ENCODE measurements at regions of chr10 and their contacts with region 1.

Region 1: DNA sequence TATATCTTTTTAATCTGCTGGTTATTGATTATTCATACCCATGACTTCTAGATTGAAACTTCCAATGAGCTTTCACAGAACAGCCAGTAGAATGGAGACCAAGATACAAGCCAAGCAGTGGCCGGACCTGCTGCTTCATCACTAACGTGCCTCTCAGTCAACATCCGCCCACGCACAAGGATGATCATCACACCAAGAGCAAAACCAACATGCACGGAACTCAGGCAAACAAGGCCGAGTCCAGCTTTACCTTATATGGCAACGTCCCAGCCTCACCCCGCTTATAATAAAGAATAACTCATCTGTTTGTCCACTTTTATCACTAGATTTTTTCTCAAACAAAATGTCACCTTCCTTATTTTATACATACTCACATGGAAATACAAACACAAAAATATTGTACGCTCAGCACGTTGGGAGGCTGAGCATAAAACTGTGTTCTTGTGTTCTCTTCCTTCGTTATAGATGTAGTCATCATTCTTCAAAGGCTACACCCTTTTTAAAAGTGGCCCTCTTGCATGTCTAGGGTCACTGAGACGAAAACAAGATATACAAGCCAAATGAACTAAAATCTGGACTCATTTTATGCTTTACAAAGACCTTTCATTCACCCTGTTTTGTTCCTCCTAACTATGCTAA is 122.7 kb downstream of the SFMBT2 start:
- DNase-seq: no peak
- H3K4me3 ChIP-seq: no peak overlapping the region
- H3K27ac ChIP-seq: no peak overlapping the region
- H3K4me1 ChIP-seq: peaks cover 0 to 4% (median 2%) of the 10 kb centered on the region in 4 experiments; a peak in 1 of 7 replicates
- H3K27me3 ChIP-seq: no peaks in the 10 kb centered on the region
- CTCF ChIP-seq: no peak
- EP300 ChIP-seq: no peak
- POLR2A ChIP-seq: no peak
- RAD21 ChIP-seq: no peak

Region 2: DNA sequence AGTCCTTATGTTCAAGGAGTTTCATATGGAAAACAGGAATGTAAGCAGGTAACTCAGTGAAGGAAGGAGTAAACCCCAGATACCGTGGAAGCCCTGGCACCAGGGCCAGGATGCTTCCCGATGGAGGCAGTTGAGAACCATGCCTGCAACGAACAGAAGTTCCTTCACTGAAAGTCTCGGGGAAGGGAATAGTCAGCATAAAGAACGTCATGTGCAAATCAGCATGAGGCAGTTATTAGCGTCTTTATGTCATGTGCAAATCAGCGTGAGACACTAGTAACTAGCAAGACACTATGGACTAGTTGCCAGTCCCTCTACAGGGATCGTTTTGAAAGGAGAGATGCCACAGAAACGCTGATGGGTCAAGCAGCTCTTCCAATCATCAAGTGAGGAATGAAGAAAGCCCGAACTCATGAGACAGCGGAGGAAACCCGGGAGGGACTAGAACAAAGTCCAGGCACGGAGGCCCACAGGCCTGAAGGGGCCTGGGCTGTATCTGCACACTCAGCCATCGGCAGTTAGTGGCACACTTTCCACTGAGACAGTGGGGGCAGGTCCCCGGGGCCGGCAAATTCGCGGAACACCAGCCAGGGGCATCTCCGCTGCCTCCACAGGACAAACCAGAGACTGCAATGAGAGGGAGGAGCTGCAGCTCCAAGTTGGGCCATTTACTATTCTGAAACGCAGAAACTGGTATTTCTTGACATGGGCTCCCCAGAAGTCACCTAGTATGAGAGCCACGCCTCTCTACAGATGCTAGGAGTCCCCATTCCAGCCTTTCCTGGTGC is 13.0 kb after region 1 on chr10:
- CTCF ChIA-PET with region 1: interaction called, 17 read pairs
- POLR2A ChIA-PET with region 1: no interaction called
- DNase-seq: peak in 1 of 2 experiments; percentile 77
- H3K4me3 ChIP-seq: no peak overlapping the region; a peak in 1 of 8 replicates
- H3K27ac ChIP-seq: no peak overlapping the region
- H3K4me1 ChIP-seq: peaks cover 2 to 10% (median 3%) of the 10 kb centered on the region in 4 experiments; a peak in 6 of 7 replicates
- H3K27me3 ChIP-seq: no peaks in the 10 kb centered on the region
- CTCF ChIP-seq: peak; percentile 50 to 65 (median 65)
- EP300 ChIP-seq: no peak
- POLR2A ChIP-seq: no peak
- RAD21 ChIP-seq: peak; percentile 41 to 60